Mammary epithelial cell (primary cell): ENCODE measurements at regions of chr1 and their contacts with region 1.

Region 1: GRCh38 chr1:89739844-89740216 is 81.0 kb upstream of the LRRC8D start:
- DNase-seq: no peak
- H3K4me3 ChIP-seq: no peak overlapping the region
- H3K27ac ChIP-seq: peak overlapping the region; percentile 4
- H3K4me1 ChIP-seq: peaks cover 13% of the 10 kb centered on the region
- H3K27me3 ChIP-seq: no peaks in the 10 kb centered on the region
- CTCF ChIP-seq: no peak

Region 2: GRCh38 chr1:89578151-89578550 is 161.7 kb before region 1 on chr1:
- CTCF ChIA-PET with region 1: no interaction called
- dilution Hi-C with region 1: no loop called
- in situ Hi-C with region 1: no loop called
- intact Hi-C with region 1: no loop called
- DNase-seq: no peak
- H3K4me3 ChIP-seq: no peak overlapping the region
- H3K27ac ChIP-seq: no peak overlapping the region
- H3K4me1 ChIP-seq: no peaks in the 10 kb centered on the region
- H3K27me3 ChIP-seq: no peaks in the 10 kb centered on the region
- CTCF ChIP-seq: no peak

Region 3: DNA sequence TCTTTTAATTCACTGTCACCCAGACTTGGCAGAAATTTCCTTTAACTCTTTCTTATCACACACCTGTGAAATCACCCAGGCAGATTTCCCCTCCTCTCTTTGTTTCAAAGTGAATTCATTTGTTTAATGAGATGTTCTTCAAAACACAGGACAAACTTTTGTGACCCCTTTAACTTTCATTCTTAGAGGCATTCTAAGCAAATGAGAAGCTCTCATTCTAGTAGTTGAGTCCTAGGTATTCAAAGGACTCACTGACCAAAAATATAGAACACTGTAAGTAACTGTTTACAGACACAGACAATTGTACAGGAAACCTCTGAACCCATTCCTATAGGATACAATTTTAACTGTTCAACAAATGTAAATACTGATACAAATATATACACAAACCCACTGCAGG is 90.0 kb before region 1 on chr1:
- CTCF ChIA-PET with region 1: no interaction called
- dilution Hi-C with region 1: loop called (anchors 5 kb)
- in situ Hi-C with region 1: no loop called
- intact Hi-C with region 1: no loop called
- DNase-seq: no peak
- H3K4me3 ChIP-seq: no peak overlapping the region
- H3K27ac ChIP-seq: no peak overlapping the region
- H3K4me1 ChIP-seq: no peaks in the 10 kb centered on the region
- H3K27me3 ChIP-seq: no peaks in the 10 kb centered on the region
- CTCF ChIP-seq: no peak